ENCODE measurements at regions of chr20 and their contacts with region 1.

Region 1: GRCh38 chr20:56540420-56540819 is 7.4 kb downstream of the FAM209B start:
- DNase-seq: no peak
- ATAC-seq: no peak
- H3K4me3 ChIP-seq: no peak overlapping the region
- H3K27ac ChIP-seq: no peak overlapping the region
- H3K4me1 ChIP-seq: no peaks in the 10 kb centered on the region
- H3K27me3 ChIP-seq: no peaks in the 10 kb centered on the region
- CTCF ChIP-seq: no peak
- POLR2A ChIP-seq: no peak

Region 2: DNA sequence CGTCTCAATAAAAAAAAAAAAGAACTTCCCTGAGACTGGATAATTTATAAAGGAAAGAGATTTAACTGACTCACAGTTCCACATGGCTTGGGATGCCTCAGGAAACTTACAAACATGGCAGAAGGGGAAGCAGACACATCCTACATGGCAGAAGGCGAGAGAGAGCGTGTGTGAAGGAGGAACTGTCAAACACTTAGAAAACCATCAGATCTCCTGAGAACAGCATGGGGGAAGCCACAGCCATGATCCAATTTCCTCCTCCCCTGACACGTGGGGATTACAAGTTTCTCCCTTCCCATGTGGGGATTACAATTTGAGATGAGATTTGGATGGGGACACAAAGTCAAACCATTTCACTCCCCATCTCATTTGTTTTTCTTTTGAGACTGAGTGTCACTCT is 42.1 kb after region 1 on chr20:
- intact Hi-C with region 1: no loop called
- DNase-seq: no peak
- ATAC-seq: no peak
- H3K4me3 ChIP-seq: no peak overlapping the region
- H3K27ac ChIP-seq: no peak overlapping the region
- H3K4me1 ChIP-seq: no peaks in the 10 kb centered on the region
- H3K27me3 ChIP-seq: no peaks in the 10 kb centered on the region
- CTCF ChIP-seq: no peak
- POLR2A ChIP-seq: no peak

Region 3: GRCh38 chr20:56974499-56975236 is 434.2 kb after region 1 on chr20:
- intact Hi-C with region 1: loop called (anchors 5 to 10 kb)
- DNase-seq: no peak
- ATAC-seq: peak in 3 of 4 donors; percentile 24 to 58 (median 46)
- H3K4me3 ChIP-seq: no peak overlapping the region
- H3K27ac ChIP-seq: no peak overlapping the region
- H3K4me1 ChIP-seq: no peaks in the 10 kb centered on the region
- H3K27me3 ChIP-seq: no peaks in the 10 kb centered on the region
- CTCF ChIP-seq: peak; percentile 44 to 66 (median 58)
- POLR2A ChIP-seq: no peak